Testis (tissue), 5 donors: ENCODE measurements at regions of chr1 and their contacts with region 1.

Region 1: GRCh38 chr1:117059678-117060440 is at the start of gene TTF2:
- DNase-seq: peak; percentile 98
- H3K4me3 ChIP-seq: peak within 1 kb of the TSS; percentile 55 to 82
- H3K27ac ChIP-seq: peak within 1 kb of the TSS; percentile 42 to 68
- H3K4me1 ChIP-seq: no peaks in the 10 kb centered on the region
- H3K27me3 ChIP-seq: no peaks in the 10 kb centered on the region
- CTCF ChIP-seq: peak in 2 of 3 experiments; percentile 9 to 48
- POLR2A ChIP-seq: no peak
- total RNA-seq, gene TTF2: 20.8 to 26.5 TPM

Region 2: DNA sequence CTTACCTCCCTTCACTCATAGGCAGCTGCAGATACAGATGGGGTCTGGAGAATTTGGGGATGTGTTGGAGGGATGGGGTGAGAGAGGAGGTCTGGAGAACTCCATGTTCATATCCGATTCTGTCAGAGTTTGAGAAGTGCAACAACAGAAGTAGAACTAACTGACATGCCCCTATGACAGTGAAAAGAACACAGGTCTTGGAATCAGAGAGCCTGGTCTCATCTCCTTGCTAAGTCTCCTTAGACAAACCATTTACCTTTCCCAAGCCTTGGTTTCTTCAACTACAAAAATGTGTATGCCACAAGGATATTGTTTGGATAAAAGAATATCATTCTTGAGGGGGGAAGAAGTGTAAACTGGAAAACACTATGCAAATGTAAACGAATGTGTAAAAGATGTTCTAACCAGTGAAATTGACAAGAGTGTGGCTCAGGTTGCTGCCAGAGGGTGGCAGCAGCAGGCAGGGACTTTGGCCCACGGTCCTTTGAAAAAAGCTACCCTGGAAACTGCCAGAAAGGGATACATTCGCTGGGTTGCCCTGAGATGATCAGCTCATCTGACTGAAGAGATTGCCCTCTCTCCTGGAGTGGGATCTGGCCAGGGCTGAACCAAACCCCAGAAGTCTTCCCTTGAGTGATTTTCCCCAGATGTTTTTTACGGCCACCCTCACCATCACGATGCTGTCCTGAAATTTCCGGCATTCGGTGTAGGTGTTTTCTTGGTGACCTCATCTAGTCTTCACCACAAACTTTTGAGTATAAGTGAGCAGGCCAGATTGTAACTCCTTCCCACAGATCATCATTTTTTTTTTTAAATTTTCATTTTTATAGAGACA is 322.6 kb before region 1 on chr1:
- intact Hi-C with region 1: loop called (anchors 10 kb)
- DNase-seq: peak; percentile 62
- H3K4me3 ChIP-seq: no peak overlapping the region
- H3K27ac ChIP-seq: no peak overlapping the region
- H3K4me1 ChIP-seq: no peaks in the 10 kb centered on the region
- H3K27me3 ChIP-seq: no peaks in the 10 kb centered on the region
- CTCF ChIP-seq: peak; percentile 23 to 55 (median 54)
- POLR2A ChIP-seq: no peak

Region 3: DNA sequence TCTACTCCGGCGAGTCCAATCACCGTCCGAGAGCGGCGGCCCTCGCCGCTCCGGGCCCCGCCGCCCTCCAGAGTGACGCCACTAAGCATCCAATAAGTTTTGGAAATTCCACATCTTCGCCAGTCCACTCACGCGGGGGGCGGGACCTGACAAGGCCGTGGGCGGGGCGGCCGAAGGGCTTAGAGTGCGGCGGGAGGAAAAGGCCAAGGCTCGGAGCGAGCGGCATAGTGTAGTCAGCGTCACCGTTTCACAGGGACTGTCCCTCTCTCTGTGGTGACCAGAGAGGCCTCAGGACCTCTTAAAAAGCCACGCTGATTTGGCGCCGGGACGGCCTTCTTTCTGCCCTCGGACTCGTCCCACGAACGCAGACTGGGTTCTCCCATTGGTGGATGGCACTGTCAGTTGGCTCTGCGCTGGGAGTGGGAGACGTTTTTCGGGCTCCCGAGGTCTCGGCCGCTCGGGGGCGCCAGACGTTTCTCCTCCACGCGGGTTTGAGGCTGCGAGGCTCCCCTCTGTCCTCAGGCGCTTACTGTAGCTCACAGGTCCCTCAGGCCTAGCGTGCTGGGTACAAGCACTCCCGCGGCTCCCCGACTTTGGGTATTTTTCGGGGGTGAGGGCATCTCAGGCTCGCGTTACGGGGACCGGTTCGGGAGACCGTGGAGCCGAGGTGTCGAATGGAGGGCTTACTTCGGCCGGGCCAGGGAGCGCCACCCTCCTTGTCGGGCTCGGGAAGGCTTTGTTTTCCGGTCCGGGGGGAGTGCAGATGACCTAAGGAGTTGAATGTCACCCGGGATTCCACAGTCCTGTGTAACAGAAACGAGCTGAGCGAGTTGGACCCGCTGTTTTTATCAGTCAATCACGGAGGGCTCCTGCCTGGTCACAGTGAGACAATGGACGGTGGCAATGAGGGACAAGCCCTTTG is 62.2 kb after region 1 on chr1:
- intact Hi-C with region 1: loop called (anchors 10 kb)
- DNase-seq: peak; percentile 98
- H3K4me3 ChIP-seq: peak overlapping the region; percentile 68 to 78
- H3K27ac ChIP-seq: peak overlapping the region; percentile 89 to 90
- H3K4me1 ChIP-seq: peaks cover 5% of the 10 kb centered on the region
- H3K27me3 ChIP-seq: no peaks in the 10 kb centered on the region
- CTCF ChIP-seq: peak; percentile 55 to 71 (median 65)
- POLR2A ChIP-seq: no peak

Region 4: DNA sequence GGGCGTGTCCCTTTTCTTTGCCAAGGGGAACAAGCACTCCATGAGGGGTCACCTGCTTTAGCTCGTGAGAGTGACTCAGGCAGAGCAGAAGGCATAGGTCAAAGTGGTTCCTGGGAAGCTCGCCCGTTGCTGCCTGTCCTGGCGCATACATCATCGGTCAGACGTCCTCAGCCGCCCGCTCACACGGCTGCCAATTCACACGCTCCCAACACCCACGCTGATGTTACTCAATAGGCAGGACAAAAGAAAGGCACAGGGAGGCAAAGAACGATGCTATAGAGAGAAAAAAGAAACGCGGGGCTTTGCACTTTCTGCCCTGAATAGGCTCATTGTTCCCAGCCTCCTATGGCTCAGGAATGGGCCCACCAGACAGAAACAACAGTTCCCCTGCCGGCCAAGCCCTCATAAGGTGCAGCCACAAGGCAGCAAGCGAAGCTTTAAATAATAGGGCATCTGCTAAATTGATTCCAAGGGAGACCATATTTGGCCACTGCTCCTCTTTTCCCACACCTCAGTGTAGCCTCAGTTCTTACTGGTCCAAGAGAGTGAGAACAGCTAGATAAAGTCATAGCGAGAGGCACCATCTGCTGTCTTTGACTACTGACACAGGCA is 112.1 kb after region 1 on chr1:
- intact Hi-C with region 1: no loop called
- DNase-seq: peak; percentile 74
- H3K4me3 ChIP-seq: peak overlapping the region in 1 of 2 donors; percentile 20
- H3K27ac ChIP-seq: peak overlapping the region in 1 of 2 donors; percentile 18
- H3K4me1 ChIP-seq: no peaks in the 10 kb centered on the region
- H3K27me3 ChIP-seq: no peaks in the 10 kb centered on the region
- CTCF ChIP-seq: no peak
- POLR2A ChIP-seq: no peak

Region 5: GRCh38 chr1:117622726-117623125 is 562.9 kb after region 1 on chr1:
- intact Hi-C with region 1: no loop called
- DNase-seq: no peak
- H3K4me3 ChIP-seq: no peak overlapping the region
- H3K27ac ChIP-seq: no peak overlapping the region
- H3K4me1 ChIP-seq: no peaks in the 10 kb centered on the region
- H3K27me3 ChIP-seq: no peaks in the 10 kb centered on the region
- CTCF ChIP-seq: no peak
- POLR2A ChIP-seq: no peak

Region 6: GRCh38 chr1:117644696-117645311 is 584.9 kb after region 1 on chr1:
- intact Hi-C with region 1: no loop called
- DNase-seq: no peak
- H3K4me3 ChIP-seq: no peak overlapping the region
- H3K27ac ChIP-seq: no peak overlapping the region
- H3K4me1 ChIP-seq: no peaks in the 10 kb centered on the region
- H3K27me3 ChIP-seq: no peaks in the 10 kb centered on the region
- CTCF ChIP-seq: no peak
- POLR2A ChIP-seq: no peak